Activated B cell treated with CpG ODN at 0.5 μM for 24 hours (primary cell): ENCODE measurements at regions of chr4 and their contacts with region 1.

Region 1: DNA sequence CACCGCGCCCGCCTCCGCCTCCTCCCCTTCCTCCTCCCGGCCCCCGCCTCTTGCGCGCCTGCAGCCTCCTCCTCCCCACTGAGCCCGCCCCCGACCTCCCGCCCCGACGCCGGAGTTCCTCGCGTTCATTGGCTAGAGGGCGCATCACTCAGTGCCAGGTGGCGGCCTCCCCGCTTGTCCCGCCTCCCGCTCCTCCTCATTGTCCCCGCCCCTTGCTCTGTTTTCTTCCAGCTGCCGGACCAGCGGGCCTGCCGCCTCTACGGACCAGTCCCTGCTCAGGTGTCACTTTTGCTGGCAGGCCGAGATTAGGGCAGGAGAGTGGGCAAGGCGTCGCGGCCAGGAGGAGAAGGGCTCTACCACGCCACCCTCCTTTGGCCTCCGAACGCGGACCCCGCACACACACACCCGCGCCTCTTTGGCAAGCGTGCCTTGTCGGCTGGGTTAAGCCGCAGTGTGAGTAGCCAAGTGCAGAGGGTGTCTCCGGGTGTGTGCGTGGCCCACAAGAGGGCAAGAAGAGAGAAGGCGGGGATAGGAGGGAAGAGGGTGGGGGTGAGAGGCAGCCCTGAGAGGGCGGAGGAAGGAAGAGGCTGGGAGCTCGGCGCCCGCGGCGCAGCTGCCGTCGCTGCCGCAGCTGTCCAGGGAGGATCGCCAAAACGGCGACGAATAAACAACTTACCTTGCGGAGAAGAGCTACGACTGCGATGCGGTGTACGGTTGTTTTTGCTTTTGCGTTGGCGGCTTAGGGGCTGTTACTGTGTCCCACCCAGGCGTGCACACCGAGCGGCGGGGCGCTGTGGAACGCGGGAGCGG is 436 bp upstream of the PPP3CA start:
- DNase-seq: peak; percentile 98
- ATAC-seq: peak; percentile 82
- H3K4me3 Mint-ChIP-seq: peak overlapping the region; percentile 94
- H3K27ac Mint-ChIP-seq: peak overlapping the region; percentile 95
- H3K4me1 Mint-ChIP-seq: peaks cover 39% of the 10 kb centered on the region
- H3K27me3 Mint-ChIP-seq: no peaks in the 10 kb centered on the region
- CTCF ChIP-seq: no peak

Region 2: GRCh38 chr4:99687120-99687519 is 1660.6 kb before region 1 on chr4:
- CTCF ChIA-PET with region 1: no interaction called
- POLR2A ChIA-PET with region 1: no interaction called
- intact Hi-C with region 1: no loop called
- DNase-seq: no peak
- ATAC-seq: no peak
- H3K4me3 Mint-ChIP-seq: no peak overlapping the region
- H3K27ac Mint-ChIP-seq: no peak overlapping the region
- H3K4me1 Mint-ChIP-seq: no peaks in the 10 kb centered on the region
- H3K27me3 Mint-ChIP-seq: peaks cover 7% of the 10 kb centered on the region
- CTCF ChIP-seq: no peak

Region 3: GRCh38 chr4:101103381-101104142 is 244.2 kb before region 1 on chr4:
- CTCF ChIA-PET with region 1: no interaction called
- POLR2A ChIA-PET with region 1: no interaction called
- intact Hi-C with region 1: loop called (anchors 1 kb)
- DNase-seq: no peak
- ATAC-seq: peak; percentile 70
- H3K4me3 Mint-ChIP-seq: peak overlapping the region; percentile 39
- H3K27ac Mint-ChIP-seq: peak overlapping the region; percentile 85
- H3K4me1 Mint-ChIP-seq: peaks cover 47% of the 10 kb centered on the region
- H3K27me3 Mint-ChIP-seq: no peaks in the 10 kb centered on the region
- CTCF ChIP-seq: no peak

Region 4: DNA sequence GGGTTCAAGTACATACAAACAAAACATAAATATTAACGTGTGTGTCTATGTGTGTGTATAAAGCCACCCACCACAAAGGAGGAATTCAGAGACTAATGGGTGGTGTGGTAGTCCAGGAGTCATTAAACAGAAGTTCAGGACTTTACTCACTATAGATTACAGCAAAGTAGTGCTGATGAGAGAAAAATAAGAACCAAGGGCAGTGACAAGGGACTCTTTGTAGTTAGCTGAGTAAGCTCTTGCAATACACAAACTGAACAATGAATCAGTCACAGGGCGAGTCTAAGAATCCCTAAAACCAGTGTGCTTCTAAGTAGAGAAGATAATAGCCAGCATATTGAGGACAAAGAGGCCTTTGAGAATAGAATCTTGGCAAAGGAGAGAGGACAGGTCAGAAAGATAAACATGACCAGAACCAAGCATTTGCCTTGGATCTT is 232.8 kb before region 1 on chr4:
- CTCF ChIA-PET with region 1: no interaction called
- POLR2A ChIA-PET with region 1: no interaction called
- intact Hi-C with region 1: no loop called
- DNase-seq: no peak
- ATAC-seq: no peak
- H3K4me3 Mint-ChIP-seq: no peak overlapping the region
- H3K27ac Mint-ChIP-seq: no peak overlapping the region
- H3K4me1 Mint-ChIP-seq: peaks cover 22% of the 10 kb centered on the region
- H3K27me3 Mint-ChIP-seq: no peaks in the 10 kb centered on the region
- CTCF ChIP-seq: no peak

Region 5: DNA sequence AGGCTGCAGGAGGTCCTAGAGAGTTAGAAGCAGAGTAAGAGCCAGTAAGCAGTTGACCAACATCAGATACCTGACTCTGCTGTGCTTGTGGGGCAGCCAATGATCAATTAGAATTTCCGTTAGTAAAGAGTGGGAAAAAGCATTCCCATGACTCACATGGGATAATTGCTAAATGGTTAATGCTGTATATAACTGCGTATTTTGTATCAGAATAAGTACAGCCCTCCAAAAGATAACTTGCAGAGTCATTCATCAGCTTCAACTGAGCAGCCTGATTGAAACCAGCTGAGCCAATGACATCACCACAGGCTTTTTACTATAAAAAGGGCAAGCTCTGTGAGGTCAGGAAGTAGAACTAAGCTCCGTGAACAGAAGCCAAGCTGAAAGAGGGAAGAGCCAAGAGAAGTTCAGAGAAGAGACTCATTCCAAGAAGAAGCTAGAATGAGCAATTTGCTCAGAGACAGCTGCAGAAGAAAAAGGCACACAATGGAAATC is 68.3 kb before region 1 on chr4:
- CTCF ChIA-PET with region 1: no interaction called
- POLR2A ChIA-PET with region 1: interaction called, 3 read pairs
- intact Hi-C with region 1: loop called (anchors 2 kb)
- DNase-seq: no peak
- ATAC-seq: peak; percentile 70
- H3K4me3 Mint-ChIP-seq: peak overlapping the region; percentile 64
- H3K27ac Mint-ChIP-seq: peak overlapping the region; percentile 86
- H3K4me1 Mint-ChIP-seq: peaks cover 82% of the 10 kb centered on the region
- H3K27me3 Mint-ChIP-seq: no peaks in the 10 kb centered on the region
- CTCF ChIP-seq: no peak

Region 6: DNA sequence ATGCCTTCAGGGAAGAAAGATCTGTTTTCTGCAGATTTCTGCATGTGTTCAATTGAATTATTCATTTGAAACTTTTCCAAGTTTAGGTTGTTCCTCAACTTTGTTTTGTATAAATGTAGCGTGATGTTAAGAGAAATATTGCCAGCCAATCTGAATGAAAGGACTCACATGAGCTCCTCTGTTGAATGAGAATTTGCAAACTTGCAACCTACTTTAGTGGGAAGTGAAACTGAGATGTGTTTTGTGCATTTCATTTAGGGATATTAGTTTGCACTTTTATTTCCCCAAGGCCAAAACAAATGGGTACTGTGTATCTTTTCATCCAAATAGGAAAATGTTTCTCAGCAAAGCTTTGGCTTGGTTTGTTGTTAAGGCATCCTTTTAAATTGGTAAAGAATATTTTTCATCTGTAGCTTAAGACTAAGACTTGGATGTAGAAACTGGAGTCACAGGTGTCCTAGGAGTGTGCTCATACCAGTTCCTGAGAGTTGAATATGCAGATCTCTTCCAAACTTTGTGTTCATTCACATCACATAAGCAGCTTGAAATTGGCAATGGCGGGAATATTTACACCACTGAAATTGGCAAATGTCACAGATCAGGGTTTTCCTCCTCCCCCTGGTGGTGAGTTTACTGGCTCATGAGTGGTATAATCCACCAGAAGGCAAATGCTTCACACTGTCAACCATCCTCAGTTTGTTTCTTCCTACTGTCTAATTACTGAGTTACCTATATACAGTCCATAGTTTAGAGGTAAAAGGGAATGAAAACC is 249.2 kb after region 1 on chr4:
- CTCF ChIA-PET with region 1: no interaction called
- POLR2A ChIA-PET with region 1: interaction called, 6 read pairs
- intact Hi-C with region 1: loop called (anchors 5 kb)
- DNase-seq: no peak
- ATAC-seq: peak; percentile 62
- H3K4me3 Mint-ChIP-seq: peak overlapping the region; percentile 7
- H3K27ac Mint-ChIP-seq: peak overlapping the region; percentile 74
- H3K4me1 Mint-ChIP-seq: peaks cover 15% of the 10 kb centered on the region
- H3K27me3 Mint-ChIP-seq: no peaks in the 10 kb centered on the region
- CTCF ChIP-seq: no peak

Region 7: DNA sequence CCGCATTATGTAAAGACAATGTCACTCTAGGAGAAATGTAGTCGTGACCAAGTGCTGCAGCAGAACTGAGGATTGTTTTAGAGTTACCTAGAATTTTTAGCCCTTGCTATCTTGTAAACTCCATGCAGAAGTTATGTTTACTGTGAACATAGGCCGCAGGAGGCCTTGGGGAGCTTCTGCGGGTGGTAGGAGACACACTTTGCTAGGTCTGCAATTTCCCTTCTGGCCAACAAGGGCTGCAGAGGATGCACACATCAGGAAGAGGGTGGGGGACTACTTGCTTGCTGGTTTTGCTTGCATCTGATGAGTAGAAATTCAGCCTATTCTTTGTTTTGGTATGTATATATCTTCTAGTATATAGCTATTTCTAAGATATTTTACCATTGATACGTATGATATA is 465.8 kb after region 1 on chr4:
- CTCF ChIA-PET with region 1: no interaction called
- POLR2A ChIA-PET with region 1: interaction called, 10 read pairs
- intact Hi-C with region 1: loop called (anchors 5 kb)
- DNase-seq: peak; percentile 39
- ATAC-seq: peak; percentile 97
- H3K4me3 Mint-ChIP-seq: peak overlapping the region; percentile 81
- H3K27ac Mint-ChIP-seq: peak overlapping the region; percentile 92
- H3K4me1 Mint-ChIP-seq: peaks cover 83% of the 10 kb centered on the region
- H3K27me3 Mint-ChIP-seq: no peaks in the 10 kb centered on the region
- CTCF ChIP-seq: no peak

Region 8: DNA sequence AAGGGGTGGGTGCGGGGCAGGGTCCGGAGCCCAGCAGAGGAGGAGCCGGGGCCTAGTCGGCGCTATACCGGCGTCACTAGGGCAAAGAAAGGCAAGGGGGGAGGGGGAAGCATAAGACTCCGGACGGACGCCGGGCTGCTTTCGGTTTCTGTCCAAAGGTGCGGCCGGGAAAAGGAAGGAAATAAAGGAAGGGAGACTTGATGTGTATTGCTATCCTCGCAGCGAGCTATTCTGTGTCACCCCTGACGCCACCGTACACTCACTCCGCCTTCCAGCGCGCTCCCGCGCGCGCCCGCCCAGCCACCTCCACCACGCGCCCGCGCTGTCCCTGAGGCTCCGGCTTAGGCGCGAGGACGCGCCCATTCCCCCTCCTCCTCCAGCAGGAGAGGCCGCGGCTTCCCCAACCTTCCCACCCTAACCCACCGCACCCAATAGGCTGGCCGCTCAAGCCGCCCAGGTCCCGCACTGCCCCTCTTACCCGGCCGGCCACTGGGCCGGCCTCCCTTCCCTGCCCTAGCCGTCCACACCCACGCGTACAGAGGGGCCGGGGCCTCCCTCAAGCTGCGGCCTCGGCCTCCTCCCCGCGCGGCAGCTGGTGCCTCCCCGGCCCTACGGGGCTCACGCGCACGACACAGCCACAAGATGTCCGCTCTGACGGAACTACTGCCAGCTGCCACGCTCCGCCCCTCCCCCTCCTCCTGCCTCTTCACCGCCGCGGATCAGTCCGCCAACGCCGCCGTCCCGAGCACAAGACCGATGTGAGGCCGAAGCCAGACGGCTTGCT is 1479.3 kb after region 1 on chr4 and contains the start of gene UBE2D3:
- CTCF ChIA-PET with region 1: no interaction called
- POLR2A ChIA-PET with region 1: no interaction called
- intact Hi-C with region 1: loop called (anchors 5 kb)
- DNase-seq: peak; percentile 94
- ATAC-seq: peak; percentile 49
- H3K4me3 Mint-ChIP-seq: no peak within 1 kb of the TSS
- H3K27ac Mint-ChIP-seq: no peak within 1 kb of the TSS
- H3K4me1 Mint-ChIP-seq: peaks cover 33% of the 10 kb centered on the region
- H3K27me3 Mint-ChIP-seq: no peaks in the 10 kb centered on the region
- CTCF ChIP-seq: no peak
- total RNA-seq, gene UBE2D3: 321 and 327 TPM in 2 replicates